H1 (cell line): ENCODE measurements at regions of chr11 and their contacts with region 1.

Region 1: DNA sequence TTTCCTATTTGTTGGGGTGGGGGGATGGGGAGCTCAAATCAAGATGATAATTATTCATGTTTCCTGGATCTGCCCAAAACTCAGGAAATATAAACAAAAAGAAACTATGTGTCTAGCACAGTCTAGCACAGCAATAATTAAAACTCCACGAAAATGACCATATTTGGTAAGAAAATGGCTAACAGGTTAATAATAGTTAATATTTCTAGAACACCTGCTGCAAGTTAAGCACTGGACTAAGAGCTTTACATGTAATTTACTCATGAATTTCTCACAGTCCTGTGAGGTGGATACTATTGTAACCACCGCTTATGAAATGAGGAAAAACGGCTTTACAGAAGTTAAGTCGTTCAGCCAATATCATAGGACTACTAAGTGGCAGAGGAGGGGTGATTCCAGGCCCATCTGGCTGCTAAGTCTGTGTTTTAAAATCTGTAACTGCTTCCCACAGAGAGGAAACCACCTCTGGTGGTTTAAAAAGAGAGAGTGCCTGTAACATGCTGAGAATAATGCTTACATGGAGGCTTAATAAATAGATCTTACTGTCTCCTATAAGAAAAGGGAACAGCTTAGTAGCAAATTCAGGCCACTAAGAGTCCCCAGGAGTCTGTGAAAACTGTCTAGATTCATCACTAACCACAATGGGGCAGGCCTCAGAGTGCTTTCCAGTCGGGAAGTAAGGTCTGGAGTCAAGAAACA is 11.0 kb upstream of the AMOTL1 start:
- DNase-seq: no peak
- H3K4me3 ChIP-seq: no peak overlapping the region
- H3K27ac ChIP-seq: no peak overlapping the region
- H3K4me1 ChIP-seq: peaks cover 0 to 3% (median 0%) of the 10 kb centered on the region in 4 experiments; a peak in 2 of 7 replicates
- H3K27me3 ChIP-seq: no peaks in the 10 kb centered on the region
- CTCF ChIP-seq: no peak
- EP300 ChIP-seq: no peak
- POLR2A ChIP-seq: no peak
- RAD21 ChIP-seq: no peak

Region 2: GRCh38 chr11:94741022-94741679 is 16.0 kb before region 1 on chr11:
- CTCF ChIA-PET with region 1: interaction called, 95 read pairs
- POLR2A ChIA-PET with region 1: interaction called, 5 read pairs
- DNase-seq: peak in 1 of 2 experiments; percentile 62
- H3K4me3 ChIP-seq: peak overlapping the region; percentile 61 to 69 (median 67)
- H3K27ac ChIP-seq: no peak overlapping the region
- H3K4me1 ChIP-seq: peaks cover 0 to 17% (median 7%) of the 10 kb centered on the region in 4 experiments; a peak in 6 of 7 replicates
- H3K27me3 ChIP-seq: peaks cover 0 to 31% (median 19%) of the 10 kb centered on the region in 4 experiments; a peak in 6 of 7 replicates
- CTCF ChIP-seq: peak in 2 of 3 experiments; percentile 38 to 66; a peak in 2 of 4 replicates
- EP300 ChIP-seq: no peak
- POLR2A ChIP-seq: no peak
- RAD21 ChIP-seq: peak; percentile 43 to 49

Region 3: DNA sequence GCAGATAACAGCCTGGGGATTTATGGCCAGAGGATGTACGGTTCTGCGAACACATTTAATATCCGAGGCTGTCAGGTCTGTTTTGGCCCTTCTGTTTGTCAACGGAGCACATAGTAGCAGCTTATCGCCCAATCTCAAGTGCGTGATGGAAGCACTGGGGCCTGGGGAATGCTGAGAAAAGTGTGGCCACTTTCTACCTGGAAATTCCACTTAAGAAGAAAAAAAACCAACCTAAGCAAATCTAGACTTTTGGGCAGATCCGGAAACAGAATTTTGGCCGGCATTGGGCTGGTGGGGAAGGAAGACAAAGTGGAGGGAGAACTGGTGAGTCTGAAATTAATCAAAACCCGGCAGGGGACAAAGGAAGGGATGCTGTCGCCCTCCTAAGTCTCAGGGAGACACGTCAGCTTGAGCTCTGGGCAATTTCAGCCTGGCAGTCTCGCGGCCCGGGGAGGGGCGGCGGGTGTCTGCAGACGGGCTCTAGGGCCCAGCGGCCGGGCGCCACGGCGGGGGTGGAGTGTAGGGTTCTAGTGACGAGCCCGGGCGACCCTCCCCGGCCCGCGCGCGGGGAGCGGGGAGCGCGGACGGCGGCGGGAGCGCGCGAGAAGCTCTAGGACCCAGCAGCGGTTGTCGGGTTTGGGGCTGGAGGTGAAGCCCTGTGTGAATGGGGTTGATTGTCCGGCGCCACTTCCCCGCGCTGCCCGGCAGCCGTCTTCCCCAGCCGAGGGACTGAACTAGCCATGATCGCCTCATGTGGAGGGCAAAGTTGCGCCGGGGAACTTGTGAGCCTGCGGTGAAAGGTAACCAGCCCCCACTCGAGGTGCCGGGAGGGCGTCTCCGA is 10.8 kb after region 1 on chr11 and contains the start of gene AMOTL1:
- CTCF ChIA-PET with region 1: interaction called, 11 read pairs
- POLR2A ChIA-PET with region 1: interaction called, 4 read pairs
- DNase-seq: peak; percentile 61 to 90
- H3K4me3 ChIP-seq: peak within 1 kb of the TSS; percentile 75 to 94 (median 78)
- H3K27ac ChIP-seq: no peak within 1 kb of the TSS
- H3K4me1 ChIP-seq: peaks cover 0 to 24% (median 17%) of the 10 kb centered on the region in 4 experiments
- H3K27me3 ChIP-seq: peaks cover 8 to 51% (median 43%) of the 10 kb centered on the region in 4 experiments
- CTCF ChIP-seq: no peak; a peak in 1 of 4 replicates
- EP300 ChIP-seq: peak in 1 of 2 experiments; percentile 42; a peak in 1 of 3 replicates
- POLR2A ChIP-seq: no peak; a peak in 1 of 3 replicates
- RAD21 ChIP-seq: peak; percentile 30 to 48; a peak in 2 of 4 replicates
- total RNA-seq, gene AMOTL1: 27.6 and 31.6 TPM in 2 replicates